ENCODE measurements at regions of chr3 and their contacts with region 1.

Region 1: GRCh38 chr3:184345317-184346144 is 8.1 kb downstream of the FAM131A start:
- DNase-seq: peak; percentile 65 to 70
- H3K4me3 ChIP-seq: no peak overlapping the region
- H3K4me3 Mint-ChIP-seq: no peak overlapping the region
- H3K27ac Mint-ChIP-seq: peak overlapping the region; percentile 12
- H3K4me1 ChIP-seq: no peaks in the 10 kb centered on the region
- H3K4me1 Mint-ChIP-seq: peaks cover 8% of the 10 kb centered on the region
- H3K27me3 ChIP-seq: no peaks in the 10 kb centered on the region
- H3K27me3 Mint-ChIP-seq: no peaks in the 10 kb centered on the region
- CTCF ChIP-seq: peak; percentile 51 to 74

Region 2: GRCh38 chr3:184362668-184363540 is 17.4 kb after region 1 on chr3:
- CTCF ChIA-PET with region 1: interaction called, 5 read pairs
- POLR2A ChIA-PET with region 1: interaction called, 7 read pairs
- intact Hi-C with region 1: loop called (anchors 1 kb)
- DNase-seq: peak; percentile 98 to 99
- H3K4me3 ChIP-seq: peak overlapping the region; percentile 74
- H3K4me3 Mint-ChIP-seq: peak overlapping the region; percentile 97
- H3K27ac Mint-ChIP-seq: peak overlapping the region; percentile 97
- H3K4me1 ChIP-seq: peaks cover 6% of the 10 kb centered on the region; the same call in 1 of the 2 replicates
- H3K4me1 Mint-ChIP-seq: peaks cover 11% of the 10 kb centered on the region
- H3K27me3 ChIP-seq: no peaks in the 10 kb centered on the region; the same call in 1 of the 2 replicates
- H3K27me3 Mint-ChIP-seq: no peaks in the 10 kb centered on the region
- CTCF ChIP-seq: peak; percentile 61 to 66

Measured in Caco-2 (cell line).